ENCODE measurements at regions of chr7 and their contacts with region 1.

Region 1: GRCh38 chr7:106285051-106285854 is 470 bp upstream of the NAMPT start:
- DNase-seq: peak; percentile 92 to 99 (median 96)
- ATAC-seq: peak; percentile 89
- H3K4me3 ChIP-seq: peak overlapping the region; percentile 81 to 83
- H3K4me3 Mint-ChIP-seq: peak overlapping the region; percentile 96
- H3K27ac ChIP-seq: peak overlapping the region; percentile 71 to 93
- H3K27ac Mint-ChIP-seq: peak overlapping the region; percentile 98
- H3K4me1 ChIP-seq: peaks cover 17% of the 10 kb centered on the region
- H3K4me1 Mint-ChIP-seq: peaks cover 27% of the 10 kb centered on the region
- H3K27me3 ChIP-seq: no peaks in the 10 kb centered on the region
- H3K27me3 Mint-ChIP-seq: peaks cover 2% of the 10 kb centered on the region
- CTCF ChIP-seq: no peak

Region 2: DNA sequence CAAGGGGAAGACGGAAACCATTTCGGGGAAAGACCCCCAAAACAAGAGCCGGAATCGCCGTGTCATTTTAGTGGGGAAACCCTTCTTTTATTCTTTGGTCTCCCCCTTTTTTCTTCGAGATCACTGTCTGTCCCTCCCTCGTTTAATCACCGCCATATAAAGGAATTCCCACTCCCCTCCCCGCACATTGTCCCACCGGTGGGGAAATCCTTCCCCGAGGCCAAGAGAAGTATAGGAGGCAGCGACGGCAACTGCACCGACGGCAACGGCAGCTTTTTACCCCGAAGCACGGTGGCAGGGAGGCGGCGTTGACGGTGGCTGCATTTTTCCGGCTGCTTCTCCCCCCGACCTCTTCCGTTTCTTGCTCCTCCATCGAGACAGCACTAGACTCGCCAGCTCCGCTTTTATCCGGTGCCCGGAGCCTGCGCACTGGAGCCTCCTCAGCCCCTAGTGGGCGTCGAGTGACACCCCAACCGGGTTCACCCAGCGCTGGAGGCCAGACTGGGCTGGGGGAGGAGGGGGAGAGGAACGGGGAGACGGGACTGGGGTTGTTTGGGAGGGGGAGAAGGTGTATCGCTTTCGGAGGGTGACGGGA is 1271.9 kb before region 1 on chr7:
- CTCF ChIA-PET with region 1: interaction called, 3 read pairs
- POLR2A ChIA-PET with region 1: interaction called, 3 read pairs
- intact Hi-C with region 1: loop called in 1 of 2 experiments (anchors 5 kb)
- DNase-seq: peak; percentile 91 to 97 (median 94)
- ATAC-seq: peak; percentile 56
- H3K4me3 ChIP-seq: peak overlapping the region; percentile 97 to 99
- H3K4me3 Mint-ChIP-seq: peak overlapping the region; percentile 99
- H3K27ac ChIP-seq: peak overlapping the region; percentile 99
- H3K27ac Mint-ChIP-seq: peak overlapping the region; percentile 100
- H3K4me1 ChIP-seq: peaks cover 42% of the 10 kb centered on the region
- H3K4me1 Mint-ChIP-seq: peaks cover 46% of the 10 kb centered on the region
- H3K27me3 ChIP-seq: no peaks in the 10 kb centered on the region
- H3K27me3 Mint-ChIP-seq: no peaks in the 10 kb centered on the region
- CTCF ChIP-seq: peak; percentile 52

Region 3: GRCh38 chr7:105531792-105532671 is 753.2 kb before region 1 on chr7 and contains the start of gene RINT1:
- CTCF ChIA-PET with region 1: no interaction called
- POLR2A ChIA-PET with region 1: interaction called, 5 read pairs
- intact Hi-C with region 1: loop called (anchors 5 kb)
- DNase-seq: peak; percentile 84 to 94 (median 87)
- ATAC-seq: peak; percentile 91
- H3K4me3 ChIP-seq: peak within 1 kb of the TSS; percentile 90 to 93
- H3K4me3 Mint-ChIP-seq: peak within 1 kb of the TSS; percentile 94
- H3K27ac ChIP-seq: peak within 1 kb of the TSS; percentile 75 to 85
- H3K27ac Mint-ChIP-seq: peak within 1 kb of the TSS; percentile 96
- H3K4me1 ChIP-seq: peaks cover 15% of the 10 kb centered on the region
- H3K4me1 Mint-ChIP-seq: peaks cover 43% of the 10 kb centered on the region
- H3K27me3 ChIP-seq: no peaks in the 10 kb centered on the region
- H3K27me3 Mint-ChIP-seq: no peaks in the 10 kb centered on the region
- CTCF ChIP-seq: peak; percentile 57
- total RNA-seq, gene RINT1: 46.3 to 50.8 TPM

Region 4: GRCh38 chr7:106346678-106347217 is 61.5 kb after region 1 on chr7:
- CTCF ChIA-PET with region 1: no interaction called
- POLR2A ChIA-PET with region 1: interaction called, 7 read pairs
- intact Hi-C with region 1: loop called (anchors 1 to 2 kb)
- DNase-seq: peak in 8 of 9 experiments; percentile 11 to 89 (median 42)
- ATAC-seq: peak; percentile 84
- H3K4me3 ChIP-seq: no peak overlapping the region
- H3K4me3 Mint-ChIP-seq: no peak overlapping the region
- H3K27ac ChIP-seq: peak overlapping the region in 1 of 2 experiments; percentile 4
- H3K27ac Mint-ChIP-seq: peak overlapping the region; percentile 55
- H3K4me1 ChIP-seq: peaks cover 8% of the 10 kb centered on the region
- H3K4me1 Mint-ChIP-seq: peaks cover 22% of the 10 kb centered on the region
- H3K27me3 ChIP-seq: no peaks in the 10 kb centered on the region
- H3K27me3 Mint-ChIP-seq: peaks cover 27% of the 10 kb centered on the region
- CTCF ChIP-seq: no peak

Region 5: GRCh38 chr7:106865130-106866041 is 580.1 kb after region 1 on chr7 and contains the start of gene PIK3CG:
- CTCF ChIA-PET with region 1: no interaction called
- POLR2A ChIA-PET with region 1: no interaction called
- intact Hi-C with region 1: loop called in 1 of 2 experiments (anchors 5 kb)
- DNase-seq: peak in 6 of 9 experiments; percentile 18 to 84 (median 40)
- ATAC-seq: peak; percentile 92
- H3K4me3 ChIP-seq: peak within 1 kb of the TSS; percentile 69 to 73
- H3K4me3 Mint-ChIP-seq: peak within 1 kb of the TSS; percentile 93
- H3K27ac ChIP-seq: peak within 1 kb of the TSS; percentile 71 to 87
- H3K27ac Mint-ChIP-seq: peak within 1 kb of the TSS; percentile 95
- H3K4me1 ChIP-seq: peaks cover 57% of the 10 kb centered on the region
- H3K4me1 Mint-ChIP-seq: peaks cover 75% of the 10 kb centered on the region
- H3K27me3 ChIP-seq: no peaks in the 10 kb centered on the region
- H3K27me3 Mint-ChIP-seq: no peaks in the 10 kb centered on the region
- CTCF ChIP-seq: no peak
- total RNA-seq, gene PIK3CG: 30.8 to 32.5 TPM

Region 6: GRCh38 chr7:107563775-107564552 is 1278.7 kb after region 1 on chr7 and contains the starts of genes COG5 and DUS4L:
- CTCF ChIA-PET with region 1: no interaction called
- POLR2A ChIA-PET with region 1: no interaction called
- intact Hi-C with region 1: loop called (anchors 2 to 10 kb)
- DNase-seq: peak; percentile 73 to 93 (median 86)
- ATAC-seq: peak; percentile 83
- H3K4me3 ChIP-seq: peak within 1 kb of the TSS; percentile 91 to 97
- H3K4me3 Mint-ChIP-seq: peak within 1 kb of the TSS; percentile 80
- H3K27ac ChIP-seq: peak within 1 kb of the TSS; percentile 95 to 96
- H3K27ac Mint-ChIP-seq: peak within 1 kb of the TSS; percentile 89
- H3K4me1 ChIP-seq: peaks cover 46% of the 10 kb centered on the region
- H3K4me1 Mint-ChIP-seq: peaks cover 65% of the 10 kb centered on the region
- H3K27me3 ChIP-seq: no peaks in the 10 kb centered on the region
- H3K27me3 Mint-ChIP-seq: no peaks in the 10 kb centered on the region
- CTCF ChIP-seq: no peak
- total RNA-seq, gene COG5: 45.7 to 46.8 TPM
- total RNA-seq, gene DUS4L: 13.1 to 16.4 TPM

Region 7: DNA sequence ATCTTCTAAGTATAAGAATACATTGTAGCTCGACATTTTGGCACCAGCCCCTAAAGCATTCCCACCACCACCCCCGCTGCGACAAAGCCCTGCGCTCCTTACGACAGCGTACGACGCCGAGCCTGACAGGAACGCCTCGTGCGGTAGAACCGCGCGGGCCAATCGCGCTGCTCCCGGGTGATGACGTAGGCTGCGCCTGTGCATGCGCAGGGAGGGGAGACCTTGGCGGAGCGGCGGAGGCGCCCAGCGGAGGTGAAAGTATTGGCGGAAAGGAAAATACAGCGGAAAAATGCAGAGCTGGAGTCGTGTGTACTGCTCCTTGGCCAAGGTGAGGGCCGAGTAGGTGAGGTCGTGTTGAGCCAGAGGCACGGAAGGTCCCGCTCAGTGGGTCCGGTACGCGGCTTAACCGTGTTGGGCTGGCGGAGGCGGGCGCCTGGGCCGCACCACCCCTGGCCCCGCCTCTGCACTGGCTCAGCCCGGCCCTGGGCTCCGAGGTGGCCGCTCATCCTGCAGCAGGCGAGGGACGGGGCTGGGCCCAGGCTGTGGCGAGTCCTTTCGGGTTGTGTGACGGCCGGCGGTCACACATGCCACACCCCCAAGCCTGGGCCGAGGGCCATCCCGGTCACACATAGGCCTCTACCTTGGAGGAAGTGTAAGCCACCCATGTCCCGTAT is 1605.8 kb after region 1 on chr7 and contains the start of gene DLD:
- CTCF ChIA-PET with region 1: no interaction called
- POLR2A ChIA-PET with region 1: no interaction called
- intact Hi-C with region 1: loop called in 1 of 2 experiments (anchors 5 kb)
- DNase-seq: peak; percentile 86 to 97 (median 93)
- ATAC-seq: peak; percentile 97
- H3K4me3 ChIP-seq: peak within 1 kb of the TSS; percentile 79 to 86
- H3K4me3 Mint-ChIP-seq: peak within 1 kb of the TSS; percentile 98
- H3K27ac ChIP-seq: peak within 1 kb of the TSS; percentile 88 to 94
- H3K27ac Mint-ChIP-seq: peak within 1 kb of the TSS; percentile 98
- H3K4me1 ChIP-seq: peaks cover 48% of the 10 kb centered on the region
- H3K4me1 Mint-ChIP-seq: peaks cover 48% of the 10 kb centered on the region
- H3K27me3 ChIP-seq: no peaks in the 10 kb centered on the region
- H3K27me3 Mint-ChIP-seq: no peaks in the 10 kb centered on the region
- CTCF ChIP-seq: no peak
- total RNA-seq, gene DLD: 83.5 to 85.9 TPM

Measured in CD8-positive, alpha-beta T cell (primary cell).